HepG2 (cell line): ENCODE measurements at regions of chr9 and their contacts with region 1.

Region 1: GRCh38 chr9:34126207-34127034 is at the start of gene DCAF12:
- DNase-seq: peak; percentile 85
- ATAC-seq: peak; percentile 93
- H3K4me3 ChIP-seq: peak within 1 kb of the TSS; percentile 66 to 88 (median 86)
- H3K27ac ChIP-seq: peak within 1 kb of the TSS; percentile 86
- H3K4me1 ChIP-seq: peaks cover 48% of the 10 kb centered on the region
- H3K27me3 ChIP-seq: no peaks in the 10 kb centered on the region; a peak in 1 of 5 replicates
- CTCF ChIP-seq: 0 out of 2 replicates have a peak, but pooled peaks have one; percentile 4
- EP300 ChIP-seq: 0 out of 4 replicates have a peak, but pooled peaks of 1 of the 2 experiments have one; percentile 5
- POLR2A ChIP-seq: peak; percentile 73 to 77
- RAD21 ChIP-seq: peak; percentile 43
- total RNA-seq, gene DCAF12: 26.8 and 36.6 TPM in 2 replicates

Region 2: GRCh38 chr9:34059281-34059680 is 67.1 kb before region 1 on chr9:
- CTCF ChIA-PET with region 1: no interaction called
- POLR2A ChIA-PET with region 1: no interaction called
- in situ Hi-C with region 1: no loop called
- intact Hi-C with region 1: no loop called
- DNase-seq: no peak
- ATAC-seq: no peak
- H3K4me3 ChIP-seq: no peak overlapping the region
- H3K27ac ChIP-seq: no peak overlapping the region
- H3K4me1 ChIP-seq: peaks cover 9% of the 10 kb centered on the region; the same call in 1 of the 2 replicates
- H3K27me3 ChIP-seq: no peaks in the 10 kb centered on the region
- CTCF ChIP-seq: no peak
- EP300 ChIP-seq: no peak
- POLR2A ChIP-seq: no peak
- RAD21 ChIP-seq: no peak

Region 3: DNA sequence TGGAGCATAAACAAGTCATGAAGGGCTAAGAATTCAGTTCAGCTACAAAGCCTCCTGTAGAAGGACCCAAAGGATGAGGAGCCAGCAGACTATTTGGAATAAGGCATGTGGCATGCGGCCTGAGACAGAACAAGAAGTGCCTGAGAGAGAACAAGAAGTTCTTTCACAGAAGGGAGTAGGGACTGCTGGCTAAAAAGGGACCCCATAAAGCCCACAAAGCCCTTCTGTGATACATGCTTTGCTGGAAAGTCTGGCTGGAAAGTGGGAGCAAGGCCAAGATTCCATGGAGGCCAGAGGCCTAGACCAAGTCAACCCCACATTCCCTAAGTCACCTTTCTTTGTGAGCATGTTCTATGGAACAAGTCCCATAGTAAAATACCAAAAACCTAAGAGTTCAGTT is 41.9 kb before region 1 on chr9:
- CTCF ChIA-PET with region 1: no interaction called
- POLR2A ChIA-PET with region 1: no interaction called
- in situ Hi-C with region 1: no loop called
- intact Hi-C with region 1: no loop called
- DNase-seq: no peak
- ATAC-seq: no peak
- H3K4me3 ChIP-seq: no peak overlapping the region
- H3K27ac ChIP-seq: no peak overlapping the region
- H3K4me1 ChIP-seq: no peaks in the 10 kb centered on the region
- H3K27me3 ChIP-seq: no peaks in the 10 kb centered on the region
- CTCF ChIP-seq: no peak
- EP300 ChIP-seq: no peak
- POLR2A ChIP-seq: no peak
- RAD21 ChIP-seq: no peak

Region 4: DNA sequence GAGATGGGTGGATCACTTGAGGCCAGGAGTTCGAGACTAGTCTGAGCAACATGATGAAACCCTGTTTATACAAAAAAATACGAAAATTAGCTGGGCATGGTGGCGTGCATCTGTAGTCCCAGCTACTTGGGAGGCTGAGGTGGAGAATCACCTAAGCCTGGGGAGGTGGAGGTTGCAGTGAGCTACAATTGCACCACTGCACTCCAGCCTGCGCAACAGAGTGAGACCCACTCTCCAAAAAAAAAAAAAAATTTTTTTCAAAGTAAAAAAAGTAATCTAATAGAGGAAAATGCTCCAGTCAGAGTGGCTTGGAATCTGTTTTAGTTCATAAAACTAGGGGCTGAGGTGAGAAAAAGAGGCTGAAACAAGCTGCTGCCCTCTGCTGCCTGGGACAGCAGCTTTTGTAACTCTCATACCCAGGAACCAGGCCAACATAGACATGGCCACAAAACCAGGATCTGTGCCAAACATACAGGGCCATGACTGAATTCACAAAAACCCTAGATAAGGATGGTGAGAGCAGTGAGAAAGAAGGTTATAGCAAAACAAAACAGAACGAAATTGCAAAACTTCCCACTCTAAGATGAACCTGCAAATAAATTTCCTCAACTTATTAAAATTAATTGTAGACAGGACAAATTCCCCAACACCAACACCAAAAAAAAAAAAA is 13.2 kb after region 1 on chr9:
- CTCF ChIA-PET with region 1: no interaction called
- POLR2A ChIA-PET with region 1: interaction called, 3 read pairs
- in situ Hi-C with region 1: no loop called
- intact Hi-C with region 1: loop called (anchors 1 kb)
- DNase-seq: peak; percentile 53
- ATAC-seq: peak; percentile 87
- H3K4me3 ChIP-seq: no peak overlapping the region
- H3K27ac ChIP-seq: no peak overlapping the region
- H3K4me1 ChIP-seq: peaks cover 39% of the 10 kb centered on the region
- H3K27me3 ChIP-seq: no peaks in the 10 kb centered on the region; a peak in 1 of 5 replicates
- CTCF ChIP-seq: peak; percentile 53
- EP300 ChIP-seq: no peak
- POLR2A ChIP-seq: no peak
- RAD21 ChIP-seq: no peak

Region 5: DNA sequence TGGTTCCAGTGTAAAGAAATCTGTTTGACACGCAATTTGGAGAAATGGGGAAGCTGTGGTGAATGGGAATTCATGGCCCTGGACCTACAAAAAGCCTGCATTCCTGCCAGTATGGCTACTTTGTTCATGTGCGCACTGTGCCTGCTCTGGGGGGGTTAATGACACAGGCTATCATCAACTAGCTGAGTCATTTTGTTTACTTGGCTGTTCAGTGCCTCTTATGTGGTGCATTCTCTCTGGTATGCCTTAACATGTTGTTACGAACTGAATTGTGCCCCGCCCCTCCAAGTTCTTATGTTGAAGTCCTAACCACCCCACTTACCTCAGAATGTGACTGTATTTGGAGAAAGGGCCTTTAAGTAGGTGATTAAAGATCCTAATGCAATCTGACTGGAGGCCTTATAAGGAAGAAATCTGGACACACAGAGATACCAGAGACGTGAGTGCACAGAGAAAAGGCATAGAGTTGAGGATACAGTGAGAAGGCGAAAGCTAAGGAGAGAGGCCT is 32.0 kb after region 1 on chr9:
- CTCF ChIA-PET with region 1: no interaction called
- POLR2A ChIA-PET with region 1: interaction called, 3 read pairs
- in situ Hi-C with region 1: no loop called
- intact Hi-C with region 1: loop called (anchors 1 kb)
- DNase-seq: peak; percentile 79
- ATAC-seq: peak; percentile 95
- H3K4me3 ChIP-seq: peak overlapping the region in 2 of 3 experiments; percentile 22; a peak in 1 of 6 replicates
- H3K27ac ChIP-seq: no peak overlapping the region
- H3K4me1 ChIP-seq: peaks cover 27% of the 10 kb centered on the region
- H3K27me3 ChIP-seq: no peaks in the 10 kb centered on the region
- CTCF ChIP-seq: no peak
- EP300 ChIP-seq: peak in 1 of 2 experiments; percentile 25; a peak in 1 of 4 replicates
- POLR2A ChIP-seq: no peak
- RAD21 ChIP-seq: no peak

Region 6: GRCh38 chr9:34190996-34191892 is 64.8 kb after region 1 on chr9:
- CTCF ChIA-PET with region 1: no interaction called
- POLR2A ChIA-PET with region 1: no interaction called
- in situ Hi-C with region 1: no loop called
- intact Hi-C with region 1: loop called (anchors 2 kb)
- DNase-seq: peak; percentile 73
- ATAC-seq: peak; percentile 86
- H3K4me3 ChIP-seq: peak overlapping the region; percentile 1 to 39 (median 24); a peak in 2 of 6 replicates
- H3K27ac ChIP-seq: peak overlapping the region; percentile 65
- H3K4me1 ChIP-seq: peaks cover 26% of the 10 kb centered on the region
- H3K27me3 ChIP-seq: no peaks in the 10 kb centered on the region
- CTCF ChIP-seq: peak; percentile 61
- EP300 ChIP-seq: peak in 1 of 2 experiments; percentile 41; a peak in 1 of 4 replicates
- POLR2A ChIP-seq: no peak
- RAD21 ChIP-seq: no peak

Region 7: GRCh38 chr9:34242830-34243229 is 116.4 kb after region 1 on chr9:
- CTCF ChIA-PET with region 1: no interaction called
- POLR2A ChIA-PET with region 1: no interaction called
- in situ Hi-C with region 1: no loop called
- intact Hi-C with region 1: no loop called
- DNase-seq: no peak
- ATAC-seq: no peak
- H3K4me3 ChIP-seq: no peak overlapping the region
- H3K27ac ChIP-seq: no peak overlapping the region
- H3K4me1 ChIP-seq: no peaks in the 10 kb centered on the region
- H3K27me3 ChIP-seq: no peaks in the 10 kb centered on the region
- CTCF ChIP-seq: no peak
- EP300 ChIP-seq: no peak
- POLR2A ChIP-seq: no peak
- RAD21 ChIP-seq: no peak

Region 8: GRCh38 chr9:34252670-34253459 is 126.4 kb after region 1 on chr9:
- CTCF ChIA-PET with region 1: no interaction called
- POLR2A ChIA-PET with region 1: no interaction called
- in situ Hi-C with region 1: loop called (anchors 10 kb)
- intact Hi-C with region 1: loop called (anchors 1 kb)
- DNase-seq: peak; percentile 50
- ATAC-seq: peak; percentile 72
- H3K4me3 ChIP-seq: no peak overlapping the region
- H3K27ac ChIP-seq: no peak overlapping the region
- H3K4me1 ChIP-seq: no peaks in the 10 kb centered on the region
- H3K27me3 ChIP-seq: no peaks in the 10 kb centered on the region
- CTCF ChIP-seq: peak; percentile 81
- EP300 ChIP-seq: no peak
- POLR2A ChIP-seq: no peak
- RAD21 ChIP-seq: peak; percentile 67

Region 9: DNA sequence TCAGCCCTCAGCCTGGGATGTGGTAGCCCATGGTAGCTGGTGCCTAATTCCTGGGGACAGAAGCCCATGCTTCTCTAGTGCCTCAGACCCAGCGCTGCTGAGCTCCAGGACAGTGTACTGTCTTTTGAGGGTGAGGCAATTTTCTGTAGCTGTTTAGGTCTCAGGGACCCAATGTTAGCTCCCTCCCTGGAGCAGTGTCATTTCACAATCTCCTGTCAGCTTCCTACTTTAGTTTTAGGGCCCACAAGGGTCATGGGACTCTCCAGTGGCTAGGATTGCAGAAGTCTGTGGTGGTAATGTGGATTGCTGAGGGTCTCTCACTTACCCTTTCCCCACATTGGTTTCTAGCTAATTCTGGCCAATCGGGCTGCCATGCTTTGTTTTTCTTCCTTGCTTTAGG is 651.2 kb after region 1 on chr9:
- CTCF ChIA-PET with region 1: no interaction called
- POLR2A ChIA-PET with region 1: no interaction called
- in situ Hi-C with region 1: no loop called
- intact Hi-C with region 1: no loop called
- DNase-seq: no peak
- ATAC-seq: no peak
- H3K4me3 ChIP-seq: no peak overlapping the region
- H3K27ac ChIP-seq: no peak overlapping the region
- H3K4me1 ChIP-seq: no peaks in the 10 kb centered on the region
- H3K27me3 ChIP-seq: no peaks in the 10 kb centered on the region
- CTCF ChIP-seq: no peak
- EP300 ChIP-seq: no peak
- POLR2A ChIP-seq: no peak
- RAD21 ChIP-seq: no peak